Left ventricle myocardium superior (tissue), 1 donor: ENCODE measurements at regions of chrX and their contacts with region 1.

Region 1: GRCh38 chrX:104195489-104196084 is 29.3 kb downstream of the FAM199X start:
- DNase-seq: no peak
- ATAC-seq: no peak

Region 2: DNA sequence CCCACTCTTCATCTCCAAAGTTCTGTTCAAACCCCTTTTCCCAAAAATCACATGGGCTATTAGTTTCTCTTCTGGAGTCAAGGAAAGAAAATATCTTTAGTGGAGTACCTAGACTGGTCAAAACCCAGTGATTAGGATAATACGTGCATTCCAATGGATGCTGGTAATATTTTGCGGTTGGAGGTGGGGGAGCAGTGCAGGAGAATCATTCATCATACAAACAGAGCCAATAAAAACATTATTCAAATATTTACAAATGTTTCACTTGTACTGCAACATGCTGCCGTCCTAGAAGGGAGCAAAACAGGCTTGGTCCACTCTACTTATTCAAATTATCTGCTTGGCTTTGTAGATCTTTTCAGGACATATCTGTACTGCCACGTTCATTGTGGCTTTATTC is 306.4 kb before region 1 on chrX:
- intact Hi-C with region 1: no loop called
- DNase-seq: no peak
- ATAC-seq: no peak

Region 3: DNA sequence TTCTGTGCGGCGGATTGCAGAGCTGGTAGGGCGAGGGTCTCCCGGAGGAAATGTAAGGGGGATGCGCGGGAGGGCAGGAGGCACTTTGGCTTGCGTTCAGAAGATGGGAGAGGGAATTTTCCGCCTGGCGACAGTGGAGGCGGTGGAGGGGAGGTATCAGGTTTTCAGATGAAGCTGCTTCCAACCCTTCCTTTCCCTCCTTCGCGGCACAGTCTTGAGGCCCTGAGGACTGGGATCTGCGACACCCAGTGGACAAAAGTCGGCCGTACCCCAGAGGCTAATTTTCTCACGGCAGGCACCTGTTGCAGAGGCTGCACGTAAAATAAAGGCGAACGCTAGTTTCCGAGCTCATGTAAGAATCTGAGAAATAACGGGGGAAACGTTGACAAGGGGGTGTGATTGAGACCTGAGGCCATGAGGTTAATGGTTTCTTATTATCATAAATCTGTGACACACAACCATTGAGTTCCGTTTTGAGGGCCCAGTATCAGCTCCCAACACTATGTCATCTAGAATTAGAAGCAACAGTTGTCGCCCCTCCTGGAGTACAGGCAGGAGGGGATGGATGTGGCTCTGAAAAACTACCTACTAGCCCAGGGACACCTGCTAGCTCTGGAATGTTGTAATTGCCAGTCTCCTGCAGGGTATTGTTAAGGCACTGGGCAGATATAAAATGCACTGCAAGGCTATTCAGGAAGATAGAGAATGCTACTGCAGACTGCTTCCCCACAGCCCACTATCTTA is 82.2 kb before region 1 on chrX:
- intact Hi-C with region 1: no loop called
- DNase-seq: peak; percentile 33
- ATAC-seq: peak; percentile 82

Region 4: GRCh38 chrX:104270920-104271512 is 75.4 kb after region 1 on chrX:
- intact Hi-C with region 1: loop called (anchors 2 kb)
- DNase-seq: peak; percentile 38
- ATAC-seq: peak; percentile 79